ENCODE measurements at regions of chr2 and their contacts with region 1.

Region 1: GRCh38 chr2:203759690-203760365 is 53.4 kb downstream of the CD28 start:
- DNase-seq: peak in 1 of 2 donors; percentile 31
- H3K4me3 ChIP-seq: no peak overlapping the region
- H3K27ac ChIP-seq: peak overlapping the region; percentile 26 to 49
- H3K4me1 ChIP-seq: no peaks in the 10 kb centered on the region
- H3K27me3 ChIP-seq: no peaks in the 10 kb centered on the region
- CTCF ChIP-seq: no peak
- POLR2A ChIP-seq: no peak

Region 2: DNA sequence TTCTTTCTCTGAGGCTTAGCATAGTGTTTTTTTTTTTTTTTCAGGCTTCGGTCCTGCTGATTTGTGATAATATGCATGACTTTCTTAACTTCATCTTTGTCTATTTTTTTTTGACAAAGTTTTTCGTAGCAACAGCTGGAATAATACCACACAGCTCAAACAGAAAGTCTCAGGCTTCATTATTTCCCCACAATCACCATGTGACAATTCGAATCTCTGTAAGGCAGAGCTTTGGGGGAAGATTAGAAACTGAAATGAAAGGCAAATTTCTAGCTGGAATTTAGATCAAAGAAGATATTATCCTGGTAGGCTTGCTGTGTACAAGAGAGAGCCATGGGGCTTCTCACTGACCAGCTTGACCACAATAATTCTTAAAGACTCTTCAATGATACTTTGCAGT is 65.6 kb before region 1 on chr2:
- intact Hi-C with region 1: no loop called
- DNase-seq: no peak
- H3K4me3 ChIP-seq: no peak overlapping the region
- H3K27ac ChIP-seq: no peak overlapping the region
- H3K4me1 ChIP-seq: no peaks in the 10 kb centered on the region
- H3K27me3 ChIP-seq: no peaks in the 10 kb centered on the region
- CTCF ChIP-seq: no peak
- POLR2A ChIP-seq: no peak

Region 3: GRCh38 chr2:203772456-203773168 is 12.8 kb after region 1 on chr2:
- intact Hi-C with region 1: loop called (anchors 2 kb)
- DNase-seq: no peak
- H3K4me3 ChIP-seq: no peak overlapping the region
- H3K27ac ChIP-seq: no peak overlapping the region
- H3K4me1 ChIP-seq: no peaks in the 10 kb centered on the region
- H3K27me3 ChIP-seq: no peaks in the 10 kb centered on the region
- CTCF ChIP-seq: no peak
- POLR2A ChIP-seq: no peak